Left lung (tissue), 14 donors: ENCODE measurements at regions of chr10 and their contacts with region 1.

Region 1: GRCh38 chr10:52215745-52216361 is 98.2 kb upstream of the DKK1 start:
- DNase-seq: peak in 2 of 4 donors; percentile 65 to 82
- ATAC-seq: peak; percentile 90
- H3K4me3 ChIP-seq: no peak overlapping the region
- H3K27ac ChIP-seq: no peak overlapping the region
- H3K4me1 ChIP-seq: peaks cover 0 to 9% of the 10 kb centered on the region in 2 donors
- H3K27me3 ChIP-seq: no peaks in the 10 kb centered on the region
- CTCF ChIP-seq: peak; percentile 52 to 74

Region 2: GRCh38 chr10:51001587-51001986 is 1214.3 kb before region 1 on chr10:
- intact Hi-C with region 1: loop called in 1 of 2 experiments (anchors 10 kb)
- DNase-seq: peak in 1 of 4 donors; percentile 46
- ATAC-seq: peak; percentile 70
- H3K4me3 ChIP-seq: no peak overlapping the region
- H3K27ac ChIP-seq: no peak overlapping the region
- H3K4me1 ChIP-seq: peaks cover 0 to 5% of the 10 kb centered on the region in 2 donors
- H3K27me3 ChIP-seq: no peaks in the 10 kb centered on the region
- CTCF ChIP-seq: peak in 1 of 2 donors; percentile 50

Region 3: DNA sequence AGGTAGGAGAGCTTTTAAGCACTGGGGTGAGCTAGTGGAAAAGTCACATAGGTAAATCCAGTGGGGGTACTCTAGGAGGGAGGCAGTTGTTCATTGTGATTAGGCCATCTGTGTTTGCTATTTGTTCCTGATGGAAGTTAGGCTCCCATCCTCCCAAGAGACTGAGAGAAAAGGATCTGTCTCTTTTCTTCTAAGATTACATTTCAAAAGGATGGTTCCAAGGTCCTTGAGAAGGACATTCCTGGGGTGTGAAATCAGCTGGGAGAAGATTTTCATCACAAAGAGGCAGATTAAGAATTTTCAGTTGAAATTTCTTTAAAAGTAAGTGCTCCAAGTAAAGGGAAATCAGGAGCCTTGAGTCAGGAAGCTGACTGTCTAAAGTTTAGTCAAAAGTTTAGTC is 305.7 kb before region 1 on chr10:
- intact Hi-C with region 1: no loop called
- DNase-seq: no peak
- ATAC-seq: no peak
- H3K4me3 ChIP-seq: no peak overlapping the region
- H3K27ac ChIP-seq: no peak overlapping the region
- H3K4me1 ChIP-seq: peaks cover 0 to 7% of the 10 kb centered on the region in 2 donors
- H3K27me3 ChIP-seq: no peaks in the 10 kb centered on the region
- CTCF ChIP-seq: no peak